ENCODE measurements at regions of chr3 and their contacts with region 1.

Region 1: GRCh38 chr3:120492103-120492502 is 41.3 kb upstream of the FSTL1 start:
- DNase-seq: peak in 1 of 2 donors; percentile 0
- H3K4me3 ChIP-seq: no peak overlapping the region
- H3K27ac ChIP-seq: no peak overlapping the region
- H3K4me1 ChIP-seq: peaks cover 9% of the 10 kb centered on the region
- H3K27me3 ChIP-seq: no peaks in the 10 kb centered on the region
- CTCF ChIP-seq: no peak
- POLR2A ChIP-seq: no peak

Region 2: GRCh38 chr3:120393243-120393642 is 98.9 kb before region 1 on chr3:
- intact Hi-C with region 1: no loop called
- DNase-seq: no peak
- H3K4me3 ChIP-seq: no peak overlapping the region
- H3K27ac ChIP-seq: no peak overlapping the region
- H3K4me1 ChIP-seq: no peaks in the 10 kb centered on the region
- H3K27me3 ChIP-seq: no peaks in the 10 kb centered on the region
- CTCF ChIP-seq: no peak
- POLR2A ChIP-seq: no peak

Region 3: GRCh38 chr3:120438665-120439370 is 53.3 kb before region 1 on chr3:
- intact Hi-C with region 1: no loop called
- DNase-seq: peak in 1 of 2 donors; percentile 82
- H3K4me3 ChIP-seq: no peak overlapping the region
- H3K27ac ChIP-seq: peak overlapping the region; percentile 27
- H3K4me1 ChIP-seq: peaks cover 98% of the 10 kb centered on the region
- H3K27me3 ChIP-seq: no peaks in the 10 kb centered on the region
- CTCF ChIP-seq: no peak
- POLR2A ChIP-seq: no peak

Region 4: DNA sequence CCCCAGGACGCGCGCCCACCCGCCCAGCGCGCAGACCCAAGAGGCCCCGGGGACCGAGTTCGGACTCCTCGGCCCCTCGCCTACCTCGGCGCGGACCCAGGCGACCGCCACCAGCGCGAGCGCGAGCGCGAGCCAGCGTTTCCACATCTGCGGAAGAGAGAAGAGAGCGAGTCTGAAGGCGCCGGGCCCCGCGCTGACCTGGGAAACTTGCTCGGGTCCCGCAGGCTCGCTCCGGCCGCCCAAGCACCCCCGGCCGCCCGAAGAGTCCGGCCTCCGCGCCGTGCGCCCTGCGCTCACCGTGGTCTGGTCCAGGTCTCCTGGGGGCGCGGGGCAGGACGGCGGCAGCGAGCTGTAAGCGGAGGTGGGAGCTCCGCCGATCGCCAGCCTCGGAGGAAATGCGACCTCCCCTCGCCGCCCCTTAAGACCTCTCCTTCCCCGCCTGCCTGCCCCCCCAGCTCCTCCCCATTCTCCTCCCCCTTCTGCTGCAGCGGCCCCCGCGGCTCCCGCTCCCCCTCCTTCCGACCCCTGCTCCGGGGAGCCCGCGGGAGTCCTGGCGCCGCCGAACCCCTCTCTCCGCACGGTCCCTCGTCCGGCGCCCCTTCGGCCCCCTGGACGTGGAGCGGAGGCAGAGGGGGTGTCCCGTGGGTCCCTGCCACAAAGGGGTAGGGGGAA is 41.4 kb before region 1 on chr3 and contains the start of gene FSTL1:
- intact Hi-C with region 1: loop called (anchors 5 kb)
- DNase-seq: peak in 1 of 2 donors; percentile 86
- H3K4me3 ChIP-seq: peak within 1 kb of the TSS; percentile 63 to 65
- H3K27ac ChIP-seq: peak within 1 kb of the TSS; percentile 86
- H3K4me1 ChIP-seq: peaks cover 46% of the 10 kb centered on the region
- H3K27me3 ChIP-seq: no peaks in the 10 kb centered on the region
- CTCF ChIP-seq: no peak
- POLR2A ChIP-seq: peak in 1 of 2 donors; percentile 77
- total RNA-seq, gene FSTL1: 387 TPM

Region 5: DNA sequence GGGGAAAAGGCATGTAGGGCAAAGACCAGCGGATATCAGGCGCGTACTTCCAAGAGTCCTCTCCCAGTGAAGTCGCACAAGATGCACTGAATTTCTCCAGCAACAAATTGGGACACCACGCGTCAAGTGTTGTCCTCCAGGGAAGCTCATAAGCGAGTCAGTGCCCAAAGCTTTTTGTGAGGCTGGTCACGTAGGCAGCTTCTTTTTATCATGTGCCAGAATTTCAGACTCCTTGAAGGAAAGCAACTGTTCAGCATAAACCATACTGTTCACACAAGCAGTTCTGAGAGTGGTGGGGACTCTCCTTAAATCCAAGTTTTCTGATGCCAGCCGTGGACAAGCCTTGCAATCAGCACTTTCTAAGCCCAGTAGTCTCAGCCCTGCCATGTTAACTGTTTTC is 31.2 kb before region 1 on chr3:
- intact Hi-C with region 1: no loop called
- DNase-seq: peak; percentile 52 to 65
- H3K4me3 ChIP-seq: no peak overlapping the region
- H3K27ac ChIP-seq: no peak overlapping the region
- H3K4me1 ChIP-seq: no peaks in the 10 kb centered on the region
- H3K27me3 ChIP-seq: no peaks in the 10 kb centered on the region
- CTCF ChIP-seq: no peak
- POLR2A ChIP-seq: no peak

Region 6: GRCh38 chr3:120567370-120568201 is 75.5 kb after region 1 on chr3:
- intact Hi-C with region 1: no loop called
- DNase-seq: peak in 1 of 2 donors; percentile 72
- H3K4me3 ChIP-seq: peak overlapping the region; percentile 7 to 16
- H3K27ac ChIP-seq: peak overlapping the region; percentile 65
- H3K4me1 ChIP-seq: peaks cover 24% of the 10 kb centered on the region
- H3K27me3 ChIP-seq: no peaks in the 10 kb centered on the region
- CTCF ChIP-seq: no peak
- POLR2A ChIP-seq: no peak